WTC11 (cell line): ENCODE measurements at regions of chr6 and their contacts with region 1.

Region 1: GRCh38 chr6:137589067-137589848 is 95.1 kb upstream of the OLIG3 start:
- DNase-seq: peak; percentile 63
- ATAC-seq: peak; percentile 99
- H3K4me3 Mint-ChIP-seq: no peak overlapping the region
- H3K27ac Mint-ChIP-seq: no peak overlapping the region
- H3K4me1 Mint-ChIP-seq: peaks cover 23% of the 10 kb centered on the region
- H3K27me3 Mint-ChIP-seq: no peaks in the 10 kb centered on the region; the same call in 1 of the 2 replicates
- CTCF ChIP-seq: peak; percentile 82

Region 2: DNA sequence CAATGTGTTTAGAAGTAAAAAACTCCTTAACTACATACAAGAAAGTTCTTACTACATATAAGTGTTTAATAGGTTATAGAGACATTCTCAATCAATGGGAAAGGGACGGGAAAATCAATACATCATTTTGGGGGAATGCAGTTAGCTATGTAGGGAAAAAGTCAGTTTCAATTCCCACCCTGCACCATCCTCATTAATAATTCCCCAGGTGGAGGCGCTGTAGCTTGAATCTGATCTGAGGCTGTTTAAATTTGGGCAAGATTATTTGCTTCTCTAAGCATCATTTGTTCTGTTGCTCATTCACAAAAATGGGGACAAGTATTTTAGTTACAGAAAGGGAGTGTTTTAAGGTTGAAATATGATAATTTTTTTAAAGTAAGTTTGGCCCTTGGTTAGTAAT is 114.2 kb before region 1 on chr6:
- CTCF ChIA-PET with region 1: interaction called, 16 read pairs
- POLR2A ChIA-PET with region 1: no interaction called
- DNase-seq: no peak
- ATAC-seq: peak; percentile 43; the same call in 1 of the 2 replicates
- H3K4me3 Mint-ChIP-seq: no peak overlapping the region
- H3K27ac Mint-ChIP-seq: no peak overlapping the region
- H3K4me1 Mint-ChIP-seq: peaks cover 19% of the 10 kb centered on the region
- H3K27me3 Mint-ChIP-seq: no peaks in the 10 kb centered on the region
- CTCF ChIP-seq: 0 out of 2 replicates have a peak, but pooled peaks have one; percentile 37

Region 3: DNA sequence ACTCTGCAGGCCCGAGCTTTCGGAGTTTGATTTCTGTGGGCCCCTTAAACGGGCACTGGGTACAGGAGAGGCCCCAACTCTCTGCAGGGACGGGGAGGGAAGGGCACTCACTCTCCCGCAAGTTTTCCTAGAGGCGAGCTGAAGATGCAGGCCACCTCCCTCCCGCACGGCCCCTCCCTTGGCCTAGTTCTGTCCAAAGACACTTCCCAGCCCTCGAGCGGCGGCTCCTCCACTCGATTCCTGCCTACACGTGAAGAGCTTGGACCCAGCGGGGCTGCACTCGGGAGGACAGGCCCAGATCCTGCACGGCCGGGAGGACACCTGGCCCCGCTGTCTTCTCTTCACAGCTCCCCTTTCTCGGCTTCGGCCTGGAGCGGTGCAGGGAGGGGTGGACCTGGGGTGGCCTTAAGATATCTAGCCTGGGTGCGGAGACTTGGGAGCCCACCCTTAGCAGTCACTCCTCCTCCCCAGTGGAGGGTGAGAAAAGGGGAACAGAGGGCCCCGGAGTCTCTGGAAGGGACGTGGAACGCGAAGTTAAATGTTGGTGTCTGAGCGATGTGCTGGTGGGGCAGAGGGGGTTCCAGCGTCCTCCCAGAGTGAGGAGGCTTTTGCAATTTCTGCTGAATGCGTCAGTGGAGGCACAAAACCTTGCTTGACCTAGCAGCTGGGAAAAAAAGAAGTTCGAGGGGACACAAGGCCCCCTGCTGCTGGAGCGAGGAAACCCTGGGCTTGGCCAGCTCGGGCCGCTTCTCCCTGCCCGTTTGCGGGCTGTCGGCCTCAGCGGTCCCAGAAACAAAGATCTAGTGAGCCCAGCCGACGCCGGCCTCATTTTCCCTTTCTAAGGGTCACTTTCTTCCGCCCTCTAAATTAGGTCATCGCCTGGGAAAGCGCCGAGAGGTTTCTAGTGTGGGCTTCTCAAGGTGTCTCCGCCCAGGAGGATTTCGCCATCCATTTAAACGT is 99.9 kb before region 1 on chr6:
- CTCF ChIA-PET with region 1: interaction called, 24 read pairs
- POLR2A ChIA-PET with region 1: no interaction called
- DNase-seq: peak; percentile 75
- ATAC-seq: peak; percentile 48
- H3K4me3 Mint-ChIP-seq: peak overlapping the region; percentile 84
- H3K27ac Mint-ChIP-seq: no peak overlapping the region
- H3K4me1 Mint-ChIP-seq: peaks cover 68% of the 10 kb centered on the region
- H3K27me3 Mint-ChIP-seq: peaks cover 96% of the 10 kb centered on the region
- CTCF ChIP-seq: no peak

Region 4: DNA sequence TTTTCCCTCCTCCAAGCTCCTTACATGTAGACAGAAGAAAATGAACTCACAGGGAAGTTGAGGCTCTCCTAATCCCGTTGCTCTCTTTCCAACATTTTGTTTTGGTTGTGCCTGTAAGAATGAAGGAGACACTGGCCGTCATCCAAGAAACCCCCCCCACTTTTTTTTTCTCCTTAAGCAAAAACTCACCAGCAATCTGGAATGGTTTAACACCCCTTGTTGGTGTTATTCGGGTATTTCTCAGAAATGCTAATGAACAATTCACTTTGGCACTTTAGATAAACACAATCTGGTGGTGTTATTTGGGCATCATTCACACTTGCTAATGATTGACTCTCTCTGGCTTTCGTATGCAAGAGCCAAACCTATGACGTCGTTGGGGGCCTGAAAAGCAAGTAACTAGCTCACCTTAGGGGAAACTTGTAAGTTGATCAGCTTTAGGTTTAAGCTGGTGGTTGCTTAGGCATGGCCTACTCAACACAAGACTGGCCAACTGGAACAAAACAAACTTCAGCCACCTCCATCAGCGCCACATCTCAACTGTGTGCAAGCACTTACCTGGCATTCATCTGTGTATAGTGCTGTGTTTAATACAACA is 70.8 kb before region 1 on chr6:
- CTCF ChIA-PET with region 1: interaction called, 37 read pairs
- POLR2A ChIA-PET with region 1: no interaction called
- DNase-seq: no peak
- ATAC-seq: peak; percentile 53
- H3K4me3 Mint-ChIP-seq: no peak overlapping the region
- H3K27ac Mint-ChIP-seq: no peak overlapping the region
- H3K4me1 Mint-ChIP-seq: peaks cover 62% of the 10 kb centered on the region
- H3K27me3 Mint-ChIP-seq: peaks cover 33% of the 10 kb centered on the region
- CTCF ChIP-seq: no peak

Region 5: GRCh38 chr6:137571854-137572253 is 17.4 kb before region 1 on chr6:
- CTCF ChIA-PET with region 1: interaction called, 26 read pairs
- POLR2A ChIA-PET with region 1: no interaction called
- DNase-seq: peak; percentile 73
- ATAC-seq: peak; percentile 62; the same call in 1 of the 2 replicates
- H3K4me3 Mint-ChIP-seq: no peak overlapping the region
- H3K27ac Mint-ChIP-seq: no peak overlapping the region
- H3K4me1 Mint-ChIP-seq: peaks cover 23% of the 10 kb centered on the region
- H3K27me3 Mint-ChIP-seq: no peaks in the 10 kb centered on the region; the same call in 1 of the 2 replicates
- CTCF ChIP-seq: peak; percentile 68

Region 6: DNA sequence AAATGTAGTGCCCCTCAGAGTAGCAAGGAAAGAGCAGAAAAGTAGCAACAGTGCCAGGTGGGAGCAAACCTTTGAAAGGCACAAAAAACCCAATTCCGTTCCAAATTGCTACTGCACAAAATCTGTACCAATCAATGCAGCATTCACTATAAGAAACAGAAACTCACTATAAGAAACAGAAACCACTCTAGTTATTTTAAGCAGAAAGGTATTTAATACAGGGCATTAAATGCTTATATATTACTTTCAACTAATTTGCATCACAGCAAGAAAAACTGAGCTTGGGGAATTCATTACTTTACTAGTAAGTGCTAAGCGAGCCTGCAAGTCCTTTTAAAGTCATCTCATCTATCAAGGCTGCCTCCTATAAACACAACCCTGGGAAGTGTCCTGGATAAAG is 21.4 kb after region 1 on chr6:
- CTCF ChIA-PET with region 1: interaction called, 22 read pairs
- POLR2A ChIA-PET with region 1: no interaction called
- DNase-seq: no peak
- ATAC-seq: no peak
- H3K4me3 Mint-ChIP-seq: no peak overlapping the region
- H3K27ac Mint-ChIP-seq: no peak overlapping the region
- H3K4me1 Mint-ChIP-seq: peaks cover 28% of the 10 kb centered on the region
- H3K27me3 Mint-ChIP-seq: no peaks in the 10 kb centered on the region; the same call in 1 of the 2 replicates
- CTCF ChIP-seq: no peak